Posterior cingulate gyrus (tissue), 11 donors: ENCODE measurements at regions of chr17 and their contacts with region 1.

Region 1: DNA sequence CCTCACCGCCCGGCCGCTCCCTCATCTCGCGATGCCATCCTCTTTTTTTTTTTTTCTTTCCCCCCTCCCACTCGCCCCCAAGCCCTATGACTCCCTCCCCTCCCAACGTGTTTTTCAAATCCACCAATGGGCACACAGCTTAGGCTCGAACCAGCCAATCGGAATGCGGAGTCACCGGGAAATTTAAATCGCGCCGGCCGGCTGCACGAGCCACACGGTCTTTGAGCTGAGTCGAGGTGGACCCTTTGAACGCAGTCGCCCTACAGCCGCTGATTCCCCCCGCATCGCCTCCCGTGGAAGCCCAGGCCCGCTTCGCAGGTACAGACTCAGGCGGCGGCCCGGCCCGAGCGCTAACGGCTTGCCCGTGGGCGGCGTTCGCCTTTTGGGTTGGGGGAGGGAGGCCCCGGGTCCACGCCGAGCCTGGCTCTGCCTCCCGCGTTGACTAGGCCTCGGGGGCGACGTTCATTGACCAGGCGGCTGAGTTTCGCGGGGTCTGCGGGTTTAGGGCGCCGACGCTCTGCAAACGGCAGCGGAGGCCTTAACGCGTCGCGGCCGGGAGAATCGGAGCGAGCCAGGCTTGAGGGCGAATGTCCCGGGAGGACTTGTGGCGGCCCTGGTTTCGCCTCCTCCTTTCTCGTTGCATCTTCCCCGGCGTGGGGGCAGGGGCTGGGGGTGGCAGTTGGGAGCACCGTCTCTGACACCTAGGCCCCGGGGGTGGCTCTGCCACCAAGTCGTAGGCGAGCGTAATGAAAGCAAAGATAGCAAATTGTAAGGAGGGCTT is at the start of gene KPNA2:
- DNase-seq: peak; percentile 86 to 98 (median 88)

Region 2: GRCh38 chr17:67343251-67343650 is 692.5 kb before region 1 on chr17:
- intact Hi-C with region 1: no loop called
- DNase-seq: no peak

Region 3: DNA sequence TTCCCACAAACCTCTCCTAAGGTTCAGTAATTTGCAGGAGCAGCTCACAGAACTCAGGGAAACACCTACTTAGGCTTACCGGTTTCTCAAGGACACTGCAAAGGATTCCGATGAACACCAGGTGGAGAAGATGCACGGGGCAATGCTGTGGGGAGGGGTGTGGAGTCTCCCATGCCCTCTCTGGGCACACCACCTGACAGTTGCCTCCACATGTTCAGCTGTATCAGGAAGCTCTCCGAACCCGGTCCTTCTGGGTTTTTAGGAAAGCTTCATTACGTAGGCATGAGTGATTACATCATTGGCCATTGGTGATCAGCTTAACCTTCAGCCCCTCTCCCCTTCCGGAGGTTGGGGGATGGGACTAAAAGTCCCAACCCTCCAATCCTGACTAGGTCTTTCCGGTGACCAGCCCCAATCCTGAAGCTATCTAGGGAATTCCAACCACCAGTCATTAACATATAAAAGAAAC is 61.1 kb before region 1 on chr17:
- intact Hi-C with region 1: no loop called
- DNase-seq: peak in 1 of 10 donors; percentile 9

Region 4: DNA sequence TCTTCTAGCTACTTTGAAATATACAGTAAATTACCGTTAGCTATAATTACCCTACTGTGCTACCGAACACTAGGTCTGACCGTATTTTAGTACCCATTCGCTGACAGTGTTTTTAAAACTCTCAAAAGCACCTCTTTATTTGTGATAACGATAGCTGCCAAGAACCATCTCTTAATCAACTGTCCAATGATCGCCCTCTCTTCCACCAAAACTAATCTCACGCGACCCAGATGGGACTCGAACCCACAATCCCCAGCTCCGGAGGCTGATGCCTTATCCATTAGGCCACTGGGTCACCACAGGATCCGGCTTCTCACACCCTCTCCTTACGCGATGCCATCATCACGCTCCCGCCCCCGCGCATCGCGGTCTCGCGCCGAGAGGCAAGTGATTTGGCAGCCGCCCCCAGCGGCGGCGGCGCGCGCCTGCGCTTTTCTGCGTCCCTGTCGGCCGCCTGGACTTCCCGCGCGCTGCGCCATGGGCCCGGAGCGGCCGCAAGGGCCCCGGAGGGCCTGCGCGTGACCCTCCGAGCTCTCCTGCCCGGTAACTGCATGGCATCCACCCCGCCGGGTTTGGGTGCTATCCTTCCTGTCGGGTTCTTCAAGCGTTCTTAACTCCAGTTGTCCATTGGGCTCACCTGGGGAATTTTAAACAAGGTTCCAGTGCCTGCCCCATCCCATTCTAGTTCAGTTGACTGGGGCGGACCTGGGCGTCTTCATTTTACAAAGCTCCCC is 15.9 kb before region 1 on chr17:
- intact Hi-C with region 1: loop called (anchors 2 kb)
- DNase-seq: peak; percentile 94 to 99 (median 96)

Region 5: GRCh38 chr17:68101075-68101992 is 65.6 kb after region 1 on chr17:
- intact Hi-C with region 1: loop called (anchors 1 kb)
- DNase-seq: peak; percentile 72 to 98 (median 88)